Caco-2 (cell line): ENCODE measurements at regions of chr20 and their contacts with region 1.

Region 1: DNA sequence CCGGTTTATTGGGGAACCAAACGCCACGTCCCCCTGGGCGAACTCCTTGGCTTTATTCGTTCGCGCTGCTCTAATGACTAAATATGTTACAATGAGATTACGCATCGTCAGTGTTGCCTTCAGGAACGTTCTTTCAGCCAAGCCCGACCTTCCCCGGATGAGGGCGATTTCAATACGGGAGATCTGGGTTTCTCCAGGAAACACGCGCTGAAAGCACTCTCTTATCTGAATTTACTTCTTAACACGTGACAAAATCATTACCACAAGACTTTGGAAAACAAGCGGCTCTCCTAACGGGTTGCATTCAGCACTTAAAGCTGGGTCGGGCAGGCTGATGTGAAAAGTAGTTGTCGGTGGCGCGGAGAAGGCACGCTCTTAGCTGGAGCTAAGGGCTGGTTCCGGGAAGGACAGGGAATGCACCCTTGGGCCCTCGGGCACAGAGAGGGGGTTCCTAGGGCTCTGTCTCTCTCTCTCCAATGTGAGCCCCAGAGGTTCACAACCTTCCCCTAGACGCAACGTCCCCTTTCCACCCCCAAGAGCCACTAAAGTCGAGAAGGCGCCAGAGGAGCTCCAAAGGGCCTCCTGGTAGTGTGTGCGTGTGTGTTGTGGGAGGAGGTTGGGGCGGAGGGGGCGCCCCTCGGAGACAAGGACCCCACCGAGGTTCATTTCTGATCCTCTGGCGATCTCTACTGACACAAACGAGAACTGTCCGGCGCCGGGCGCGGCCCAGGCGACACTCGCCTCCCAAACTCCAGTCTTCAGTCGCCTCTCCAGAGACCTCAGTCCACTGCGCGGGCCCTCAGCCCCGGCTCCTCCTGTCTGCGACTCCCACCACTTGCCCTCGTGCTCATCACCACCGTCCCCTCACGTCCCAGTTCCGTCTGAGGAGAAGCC is 7.1 kb upstream of the NKX2-2 start:
- DNase-seq: no peak
- H3K4me3 ChIP-seq: no peak overlapping the region
- H3K4me3 Mint-ChIP-seq: peak overlapping the region; percentile 63
- H3K27ac Mint-ChIP-seq: no peak overlapping the region
- H3K4me1 ChIP-seq: peaks cover 16% of the 10 kb centered on the region
- H3K4me1 Mint-ChIP-seq: no peaks in the 10 kb centered on the region
- H3K27me3 ChIP-seq: peaks cover 8% of the 10 kb centered on the region
- H3K27me3 Mint-ChIP-seq: peaks cover 62% of the 10 kb centered on the region
- CTCF ChIP-seq: no peak

Region 2: DNA sequence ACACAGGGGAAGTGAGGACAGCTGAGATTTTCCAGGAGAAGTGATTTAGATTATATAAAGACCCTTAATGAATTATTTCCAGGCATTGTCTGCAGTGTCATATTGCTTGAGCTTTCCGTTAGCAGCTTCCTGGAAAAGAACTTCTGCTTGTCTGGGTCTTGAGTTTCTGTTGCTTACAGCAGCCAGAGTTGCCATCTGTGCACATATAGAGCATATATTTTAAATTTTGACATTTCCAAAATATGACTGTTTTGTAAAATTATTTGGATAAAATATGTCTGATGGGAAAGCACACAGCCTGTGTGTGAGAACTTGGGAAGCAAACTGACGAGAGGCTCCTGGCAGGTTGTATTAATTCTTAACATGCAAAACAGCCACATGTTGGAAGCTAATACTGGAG is 13.9 kb after region 1 on chr20:
- CTCF ChIA-PET with region 1: interaction called, 7 read pairs
- POLR2A ChIA-PET with region 1: no interaction called
- intact Hi-C with region 1: loop called (anchors 1 kb)
- DNase-seq: no peak
- H3K4me3 ChIP-seq: no peak overlapping the region
- H3K4me3 Mint-ChIP-seq: no peak overlapping the region
- H3K27ac Mint-ChIP-seq: no peak overlapping the region
- H3K4me1 ChIP-seq: no peaks in the 10 kb centered on the region
- H3K4me1 Mint-ChIP-seq: no peaks in the 10 kb centered on the region
- H3K27me3 ChIP-seq: 0 out of 2 replicates have a peak, but pooled peaks cover 1% of the 10 kb centered on the region
- H3K27me3 Mint-ChIP-seq: peaks cover 10% of the 10 kb centered on the region
- CTCF ChIP-seq: no peak

Region 3: GRCh38 chr20:22063753-22064152 is 542.8 kb after region 1 on chr20:
- CTCF ChIA-PET with region 1: no interaction called
- POLR2A ChIA-PET with region 1: no interaction called
- intact Hi-C with region 1: no loop called
- DNase-seq: no peak
- H3K4me3 ChIP-seq: no peak overlapping the region
- H3K4me3 Mint-ChIP-seq: no peak overlapping the region
- H3K27ac Mint-ChIP-seq: no peak overlapping the region
- H3K4me1 ChIP-seq: no peaks in the 10 kb centered on the region
- H3K4me1 Mint-ChIP-seq: no peaks in the 10 kb centered on the region
- H3K27me3 ChIP-seq: no peaks in the 10 kb centered on the region; the same call in none of the 2 replicates
- H3K27me3 Mint-ChIP-seq: peaks cover 16% of the 10 kb centered on the region
- CTCF ChIP-seq: no peak